Activated naive CD4-positive, alpha-beta T cell treated with anti-CD3 and anti-CD28 coated beads for 36 hours (primary cell): ENCODE measurements at regions of chr4 and their contacts with region 1.

Region 1: DNA sequence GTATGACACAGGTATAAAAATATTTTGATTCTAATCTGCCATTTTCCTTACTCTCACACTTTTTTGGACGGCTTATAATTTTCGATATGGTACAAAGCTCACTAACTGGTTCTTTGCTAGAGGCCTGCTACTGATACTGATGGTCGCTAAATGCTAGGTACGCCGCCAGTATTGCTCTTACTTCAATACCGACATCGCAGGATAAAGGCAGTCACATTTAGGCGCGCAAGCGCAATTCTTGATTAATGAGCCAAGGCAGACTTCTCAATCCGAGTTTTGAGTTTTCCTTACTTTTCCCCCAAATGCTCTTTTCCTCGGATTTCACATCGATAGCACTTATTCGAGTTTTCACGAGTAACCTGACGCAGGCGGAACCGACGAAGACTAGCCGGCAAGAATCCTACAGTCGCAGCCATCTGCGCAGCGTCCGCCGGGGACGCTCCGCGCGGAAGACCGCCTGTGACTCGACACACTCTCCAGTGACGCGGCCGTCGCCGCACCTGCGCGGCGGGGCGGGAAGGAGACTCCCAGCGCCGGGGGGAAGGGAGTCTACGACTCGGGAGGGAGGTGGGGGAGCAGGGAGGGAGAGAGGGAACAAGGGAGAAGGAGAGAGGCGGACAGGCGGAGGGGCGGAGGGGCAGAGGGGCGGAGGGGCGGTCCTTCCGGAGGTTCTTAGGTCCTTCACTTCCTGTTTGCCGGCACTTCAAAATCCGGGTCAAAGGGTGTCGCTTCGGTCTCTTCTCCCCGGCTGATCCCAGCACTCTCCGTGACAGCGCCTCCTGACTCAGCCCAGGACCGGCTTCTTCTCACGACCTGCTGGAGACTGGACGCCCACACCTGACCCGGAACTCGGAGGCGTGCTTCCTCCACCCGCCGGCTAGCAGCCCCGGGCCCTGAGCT is at the start of gene USP38:
- DNase-seq: peak; percentile 93
- H3K4me3 Mint-ChIP-seq: peak within 1 kb of the TSS; percentile 95
- H3K27ac Mint-ChIP-seq: peak within 1 kb of the TSS; percentile 97
- H3K4me1 Mint-ChIP-seq: peaks cover 40% of the 10 kb centered on the region
- H3K27me3 Mint-ChIP-seq: no peaks in the 10 kb centered on the region
- total RNA-seq, gene USP38: 14.4 to 15.5 TPM

Region 2: GRCh38 chr4:141636082-141636770 is 1548.2 kb before region 1 on chr4 and contains the start of gene IL15:
- CTCF ChIA-PET with region 1: no interaction called
- intact Hi-C with region 1: loop called (anchors 5 kb)
- DNase-seq: peak; percentile 86
- H3K4me3 Mint-ChIP-seq: peak within 1 kb of the TSS; percentile 89
- H3K27ac Mint-ChIP-seq: no peak within 1 kb of the TSS
- H3K4me1 Mint-ChIP-seq: peaks cover 10% of the 10 kb centered on the region
- H3K27me3 Mint-ChIP-seq: peaks cover 9% of the 10 kb centered on the region
- total RNA-seq, gene IL15: 0.19 to 0.52 TPM

Region 3: GRCh38 chr4:142353149-142353738 is 831.2 kb before region 1 on chr4:
- CTCF ChIA-PET with region 1: no interaction called
- intact Hi-C with region 1: loop called (anchors 10 kb)
- DNase-seq: no peak
- H3K4me3 Mint-ChIP-seq: peak overlapping the region; percentile 48
- H3K27ac Mint-ChIP-seq: peak overlapping the region; percentile 90
- H3K4me1 Mint-ChIP-seq: peaks cover 94% of the 10 kb centered on the region
- H3K27me3 Mint-ChIP-seq: no peaks in the 10 kb centered on the region

Region 4: DNA sequence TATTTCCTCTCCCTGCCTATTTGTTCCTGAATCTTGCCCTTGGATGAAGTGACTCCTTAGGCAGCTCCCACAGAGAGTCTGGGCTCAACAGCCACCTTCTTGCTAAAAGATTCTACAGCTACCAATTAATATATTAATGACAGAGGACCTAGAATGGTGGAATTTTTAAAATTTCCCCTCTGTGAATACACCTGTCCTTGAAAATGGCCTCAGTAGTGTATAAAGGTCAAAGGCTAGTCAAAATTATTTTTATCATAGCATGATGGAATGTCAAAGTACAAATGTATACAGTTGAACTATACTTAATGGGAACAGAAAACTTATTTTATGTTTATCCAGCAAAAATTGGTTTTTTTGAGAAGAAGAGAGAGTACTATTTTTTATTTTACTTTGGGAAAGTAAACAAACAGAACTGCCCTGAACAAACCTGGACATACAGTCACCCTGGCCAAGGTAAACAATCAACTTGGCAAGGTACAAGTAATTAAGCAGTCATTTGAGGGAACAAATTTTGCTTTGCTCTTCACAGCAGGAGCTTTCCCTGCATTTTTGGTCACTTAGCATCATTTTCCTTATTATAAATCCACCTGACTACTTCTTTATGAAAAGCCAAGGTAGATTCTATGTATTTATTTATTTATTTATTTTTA is 589.1 kb before region 1 on chr4:
- CTCF ChIA-PET with region 1: no interaction called
- intact Hi-C with region 1: no loop called
- DNase-seq: no peak
- H3K4me3 Mint-ChIP-seq: no peak overlapping the region
- H3K27ac Mint-ChIP-seq: no peak overlapping the region
- H3K4me1 Mint-ChIP-seq: peaks cover 17% of the 10 kb centered on the region
- H3K27me3 Mint-ChIP-seq: no peaks in the 10 kb centered on the region

Region 5: GRCh38 chr4:143335979-143336780 is 151.7 kb after region 1 on chr4:
- CTCF ChIA-PET with region 1: no interaction called
- intact Hi-C with region 1: loop called (anchors 2 kb)
- DNase-seq: peak; percentile 20
- H3K4me3 Mint-ChIP-seq: peak overlapping the region; percentile 75
- H3K27ac Mint-ChIP-seq: no peak overlapping the region
- H3K4me1 Mint-ChIP-seq: peaks cover 3% of the 10 kb centered on the region
- H3K27me3 Mint-ChIP-seq: peaks cover 40% of the 10 kb centered on the region